ENCODE measurements at regions of chr2 and their contacts with region 1.

Region 1: DNA sequence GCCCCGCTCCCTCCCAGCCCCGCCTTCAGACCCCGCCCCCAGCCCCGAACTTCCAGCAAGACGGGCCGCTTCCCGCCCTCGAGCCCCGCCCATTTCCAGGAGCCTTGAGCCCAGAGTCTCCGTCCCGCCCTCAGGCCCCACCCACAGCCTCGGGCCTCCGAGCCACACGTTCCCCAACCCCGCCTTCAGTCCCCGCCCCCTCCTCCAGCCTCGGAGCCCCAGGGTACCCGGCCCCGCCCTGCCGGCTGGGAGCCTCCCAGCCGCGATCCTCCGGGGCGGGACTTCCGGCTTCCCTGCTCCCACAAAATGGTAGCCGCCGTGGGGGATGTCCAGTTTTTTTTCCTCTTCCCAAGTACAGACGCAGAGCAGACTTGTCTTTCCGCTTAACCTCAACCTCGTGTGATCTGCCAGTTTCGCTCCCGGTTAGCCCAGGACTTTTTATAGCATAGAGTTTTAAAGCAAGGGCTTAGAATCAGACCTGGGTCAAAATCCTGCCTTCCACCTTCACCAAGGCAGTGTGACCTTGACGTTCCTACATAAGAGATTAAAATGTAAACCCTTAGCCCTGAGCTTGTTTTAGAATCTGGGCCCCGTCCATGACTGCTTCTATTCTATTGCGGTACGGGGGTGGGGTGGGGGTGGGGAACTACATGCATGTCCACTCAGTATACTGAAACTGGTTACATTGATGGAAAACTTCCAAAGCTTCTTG is 435 bp upstream of the GPR155 start:
- DNase-seq: peak; percentile 100
- H3K4me3 Mint-ChIP-seq: peak overlapping the region; percentile 93
- H3K27ac Mint-ChIP-seq: peak overlapping the region; percentile 95
- H3K4me1 Mint-ChIP-seq: peaks cover 50% of the 10 kb centered on the region
- H3K27me3 Mint-ChIP-seq: no peaks in the 10 kb centered on the region

Region 2: GRCh38 chr2:174395284-174395968 is 91.8 kb before region 1 on chr2 and contains the start of gene SCRN3:
- CTCF ChIA-PET with region 1: no interaction called
- POLR2A ChIA-PET with region 1: no interaction called
- intact Hi-C with region 1: loop called (anchors 5 kb)
- DNase-seq: peak; percentile 88
- H3K4me3 Mint-ChIP-seq: peak within 1 kb of the TSS; percentile 98
- H3K27ac Mint-ChIP-seq: peak within 1 kb of the TSS; percentile 96
- H3K4me1 Mint-ChIP-seq: peaks cover 28% of the 10 kb centered on the region
- H3K27me3 Mint-ChIP-seq: no peaks in the 10 kb centered on the region
- total RNA-seq, gene SCRN3: 12.4 to 12.9 TPM

Region 3: GRCh38 chr2:174522553-174522952 is 35.3 kb after region 1 on chr2:
- CTCF ChIA-PET with region 1: no interaction called
- POLR2A ChIA-PET with region 1: no interaction called
- intact Hi-C with region 1: loop called (anchors 1 kb)
- DNase-seq: no peak
- H3K4me3 Mint-ChIP-seq: no peak overlapping the region
- H3K27ac Mint-ChIP-seq: no peak overlapping the region
- H3K4me1 Mint-ChIP-seq: peaks cover 7% of the 10 kb centered on the region
- H3K27me3 Mint-ChIP-seq: no peaks in the 10 kb centered on the region

Region 4: DNA sequence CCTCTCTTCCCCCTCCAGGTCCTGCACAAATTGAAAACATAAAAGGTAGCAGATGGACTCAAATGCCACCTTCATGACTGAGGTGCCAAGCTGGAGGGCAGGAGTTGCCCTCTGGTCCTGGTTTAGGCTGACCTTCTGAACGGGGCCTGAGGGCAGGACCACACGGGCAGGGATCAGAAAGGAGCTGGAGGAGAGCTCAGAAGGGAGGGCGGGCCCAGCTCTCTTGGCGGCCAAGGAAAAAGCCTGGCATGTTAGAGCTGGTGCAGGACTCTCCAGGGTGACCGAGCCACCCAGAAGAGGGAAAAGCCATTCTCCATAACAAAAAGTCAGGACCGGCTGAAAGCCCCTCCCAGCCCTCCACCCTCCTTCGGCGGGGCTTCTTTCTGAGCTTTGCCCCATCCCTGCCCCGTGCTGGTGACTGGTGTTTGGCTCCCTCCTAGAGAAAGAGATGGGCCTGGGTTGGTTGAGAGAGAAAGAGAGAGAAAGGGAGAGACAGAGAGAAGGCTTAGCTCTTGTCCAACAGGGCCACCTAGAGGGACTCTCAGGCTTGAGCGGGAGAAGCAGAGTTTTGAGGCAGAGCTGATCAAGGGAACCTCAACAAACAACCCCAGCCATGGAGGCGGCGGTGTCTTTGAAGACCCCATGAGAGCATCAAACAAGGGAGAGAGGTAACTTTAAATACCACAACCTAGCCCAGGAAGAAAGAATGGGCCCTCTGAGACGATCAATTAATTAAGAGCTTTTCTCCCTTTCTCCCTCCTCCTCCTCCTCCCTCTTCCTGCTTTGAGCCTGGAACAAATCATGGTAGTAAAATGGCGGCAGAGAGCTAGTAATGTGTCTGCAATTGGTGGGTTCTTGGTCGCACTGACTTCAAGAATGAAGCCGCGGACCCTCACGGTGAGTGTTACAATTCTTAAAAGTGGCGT is 59.6 kb after region 1 on chr2:
- CTCF ChIA-PET with region 1: interaction called, 17 read pairs
- POLR2A ChIA-PET with region 1: no interaction called
- intact Hi-C with region 1: loop called (anchors 2 kb)
- DNase-seq: peak; percentile 66
- H3K4me3 Mint-ChIP-seq: no peak overlapping the region
- H3K27ac Mint-ChIP-seq: peak overlapping the region; percentile 65
- H3K4me1 Mint-ChIP-seq: peaks cover 22% of the 10 kb centered on the region
- H3K27me3 Mint-ChIP-seq: no peaks in the 10 kb centered on the region